Vagina (tissue), 2 donors: ENCODE measurements at regions of chr3 and their contacts with region 1.

Region 1: DNA sequence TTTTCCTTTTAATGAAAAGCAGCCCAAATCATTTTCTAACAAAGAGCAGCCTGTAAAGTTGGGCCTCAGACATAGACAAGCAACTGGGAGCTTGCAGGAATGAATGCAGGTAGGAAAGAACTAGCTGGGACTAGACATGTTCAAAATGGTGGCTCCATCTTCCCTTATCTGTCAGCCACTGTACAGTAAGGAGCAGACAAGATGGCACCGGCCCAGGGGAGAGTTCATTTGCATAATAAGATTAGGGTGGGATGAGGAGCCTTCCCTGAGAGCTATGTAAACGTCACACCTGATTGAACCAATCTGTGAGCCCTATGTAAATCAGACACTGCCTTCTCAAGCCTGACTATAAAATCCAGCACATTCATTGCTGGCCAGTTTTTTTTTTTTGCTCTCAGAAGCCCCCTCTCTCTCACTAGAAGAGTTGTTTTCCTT is 59.7 kb upstream of the GK5 start:
- DNase-seq: no peak
- H3K4me3 ChIP-seq: no peak overlapping the region
- H3K27ac ChIP-seq: no peak overlapping the region
- H3K4me1 ChIP-seq: no peaks in the 10 kb centered on the region
- H3K27me3 ChIP-seq: no peaks in the 10 kb centered on the region
- CTCF ChIP-seq: no peak
- POLR2A ChIP-seq: no peak

Region 2: GRCh38 chr3:141342386-141342785 is 942.7 kb before region 1 on chr3:
- intact Hi-C with region 1: loop called (anchors 5 kb)
- DNase-seq: no peak
- H3K4me3 ChIP-seq: no peak overlapping the region
- H3K27ac ChIP-seq: no peak overlapping the region
- H3K4me1 ChIP-seq: no peaks in the 10 kb centered on the region
- H3K27me3 ChIP-seq: no peaks in the 10 kb centered on the region
- CTCF ChIP-seq: no peak
- POLR2A ChIP-seq: no peak

Region 3: GRCh38 chr3:142808103-142808917 is 523.2 kb after region 1 on chr3:
- intact Hi-C with region 1: no loop called
- DNase-seq: no peak
- H3K4me3 ChIP-seq: no peak overlapping the region
- H3K27ac ChIP-seq: no peak overlapping the region
- H3K4me1 ChIP-seq: no peaks in the 10 kb centered on the region
- H3K27me3 ChIP-seq: no peaks in the 10 kb centered on the region
- CTCF ChIP-seq: no peak
- POLR2A ChIP-seq: no peak